K562 (cell line): ENCODE measurements at regions of chr15 and their contacts with region 1.

Region 1: DNA sequence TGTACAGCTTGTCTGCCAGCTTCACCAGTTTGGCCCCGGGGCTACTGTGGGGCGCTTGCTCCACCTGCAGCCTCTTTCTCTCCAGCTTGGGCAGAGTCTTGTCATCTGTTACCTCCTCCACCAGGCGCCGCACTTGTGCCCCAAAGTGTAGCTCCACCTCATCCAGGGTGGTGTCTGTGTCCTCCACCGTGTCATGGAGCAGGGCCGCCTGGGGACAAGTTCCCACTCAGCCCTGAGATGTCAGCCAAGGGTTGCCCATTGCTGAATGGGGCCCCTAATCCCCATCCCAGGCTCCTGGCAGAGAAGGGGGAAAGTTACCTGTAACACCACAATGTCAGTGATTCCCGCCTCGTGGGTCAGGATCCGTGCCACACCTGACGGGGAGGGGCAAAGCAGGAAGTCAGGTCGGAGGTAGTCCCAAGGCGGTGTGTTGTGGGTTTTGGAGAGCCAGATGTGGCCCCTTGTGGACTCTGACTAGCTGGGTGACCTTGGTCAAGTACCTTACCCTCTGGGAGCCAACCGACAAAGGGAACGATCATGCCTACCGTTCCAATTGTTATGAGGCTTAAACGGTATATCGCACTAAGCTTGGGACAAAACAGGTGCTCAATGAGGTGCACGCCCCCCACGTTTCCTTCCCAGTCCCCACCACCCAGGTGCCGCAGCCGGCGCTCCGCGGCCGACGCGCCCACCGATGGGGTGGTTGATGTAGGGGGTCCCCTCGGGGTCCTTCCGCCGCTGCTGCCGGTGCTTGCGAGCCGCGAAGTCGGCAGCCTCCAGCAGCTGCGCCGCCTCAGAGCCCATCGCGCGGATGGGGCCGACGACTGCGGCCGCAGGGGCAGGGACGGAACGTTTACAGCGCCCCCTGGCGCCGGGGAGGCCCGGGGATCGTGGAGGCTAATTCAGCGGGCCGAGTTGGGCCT is at the start of gene HDDC3:
- DNase-seq: peak; percentile 80 to 94 (median 86)
- ATAC-seq: peak; percentile 74
- H3K4me3 ChIP-seq: peak within 1 kb of the TSS; percentile 66
- H3K27ac ChIP-seq: peak within 1 kb of the TSS; percentile 92
- H3K4me1 ChIP-seq: peaks cover 44 to 69% of the 10 kb centered on the region in 2 experiments
- H3K27me3 ChIP-seq: no peaks in the 10 kb centered on the region
- CTCF ChIP-seq: peak; percentile 92 to 98 (median 98)
- EP300 ChIP-seq: peak; percentile 40
- POLR2A ChIP-seq: peak; percentile 89
- RAD21 ChIP-seq: peak; percentile 49 to 74
- polyA plus RNA-seq, gene HDDC3: 14.9 to 21.3 TPM

Region 2: GRCh38 chr15:90648137-90649070 is 283.6 kb before region 1 on chr15:
- CTCF ChIA-PET with region 1: interaction called, 8 read pairs
- POLR2A ChIA-PET with region 1: no interaction called
- in situ Hi-C with region 1: no loop called
- intact Hi-C with region 1: loop called (anchors 1 kb)
- DNase-seq: peak; percentile 67 to 97 (median 76)
- ATAC-seq: peak; percentile 83
- H3K4me3 ChIP-seq: no peak overlapping the region
- H3K27ac ChIP-seq: peak overlapping the region; percentile 97
- H3K4me1 ChIP-seq: peaks cover 33 to 38% of the 10 kb centered on the region in 2 experiments
- H3K27me3 ChIP-seq: no peaks in the 10 kb centered on the region
- CTCF ChIP-seq: peak; percentile 82 to 94 (median 88)
- EP300 ChIP-seq: peak; percentile 89
- POLR2A ChIP-seq: peak; percentile 92
- RAD21 ChIP-seq: peak; percentile 96

Region 3: DNA sequence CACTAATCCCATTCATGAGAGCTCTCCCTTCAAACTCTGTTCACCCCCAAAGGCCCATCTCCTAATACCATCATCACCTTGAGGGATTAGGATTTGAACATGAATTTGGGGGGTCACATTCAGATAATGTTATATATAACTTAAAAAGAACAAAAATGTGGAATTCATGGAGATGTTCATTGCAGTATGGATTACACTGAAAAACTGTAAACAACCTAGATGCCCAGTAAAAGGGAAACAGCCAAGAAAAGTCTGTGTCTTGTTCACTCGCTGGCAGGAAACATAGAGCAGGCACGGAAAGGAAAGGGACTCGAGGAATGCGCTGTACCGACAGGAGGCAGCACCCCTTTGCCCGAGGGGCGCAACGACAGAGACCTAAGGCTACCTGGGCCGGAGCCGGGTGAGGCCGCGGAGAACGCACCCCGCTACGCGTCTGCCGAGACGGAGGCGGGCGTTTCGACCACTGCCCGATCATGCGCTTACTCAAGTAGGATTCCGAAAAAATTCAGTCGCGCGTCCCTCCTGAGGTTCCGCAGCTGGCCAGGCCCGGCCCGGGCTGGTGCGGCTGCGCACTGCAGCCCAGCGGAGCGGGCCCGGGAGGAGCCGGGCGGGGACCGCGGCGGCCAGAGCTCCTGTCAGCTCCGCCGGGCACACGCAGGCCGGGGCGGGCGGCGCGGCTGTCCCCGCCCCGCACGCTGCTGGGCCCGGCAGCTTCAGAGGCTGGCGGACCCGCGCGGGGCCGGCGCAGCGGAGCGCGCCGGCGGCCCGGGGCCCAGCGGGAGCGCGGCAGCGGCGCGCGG is 29.8 kb before region 1 on chr15:
- CTCF ChIA-PET with region 1: interaction called, 6 read pairs
- POLR2A ChIA-PET with region 1: interaction called, 70 read pairs
- in situ Hi-C with region 1: no loop called
- intact Hi-C with region 1: loop called (anchors 1 kb)
- DNase-seq: peak; percentile 75 to 92 (median 90)
- ATAC-seq: peak; percentile 75
- H3K4me3 ChIP-seq: peak overlapping the region; percentile 69
- H3K27ac ChIP-seq: peak overlapping the region; percentile 99
- H3K4me1 ChIP-seq: peaks cover 28 to 69% of the 10 kb centered on the region in 2 experiments; a peak in 4 of 5 replicates
- H3K27me3 ChIP-seq: no peaks in the 10 kb centered on the region
- CTCF ChIP-seq: peak; percentile 61 to 77 (median 69)
- EP300 ChIP-seq: no peak
- POLR2A ChIP-seq: peak; percentile 73
- RAD21 ChIP-seq: peak in 1 of 2 experiments; percentile 45

Region 4: DNA sequence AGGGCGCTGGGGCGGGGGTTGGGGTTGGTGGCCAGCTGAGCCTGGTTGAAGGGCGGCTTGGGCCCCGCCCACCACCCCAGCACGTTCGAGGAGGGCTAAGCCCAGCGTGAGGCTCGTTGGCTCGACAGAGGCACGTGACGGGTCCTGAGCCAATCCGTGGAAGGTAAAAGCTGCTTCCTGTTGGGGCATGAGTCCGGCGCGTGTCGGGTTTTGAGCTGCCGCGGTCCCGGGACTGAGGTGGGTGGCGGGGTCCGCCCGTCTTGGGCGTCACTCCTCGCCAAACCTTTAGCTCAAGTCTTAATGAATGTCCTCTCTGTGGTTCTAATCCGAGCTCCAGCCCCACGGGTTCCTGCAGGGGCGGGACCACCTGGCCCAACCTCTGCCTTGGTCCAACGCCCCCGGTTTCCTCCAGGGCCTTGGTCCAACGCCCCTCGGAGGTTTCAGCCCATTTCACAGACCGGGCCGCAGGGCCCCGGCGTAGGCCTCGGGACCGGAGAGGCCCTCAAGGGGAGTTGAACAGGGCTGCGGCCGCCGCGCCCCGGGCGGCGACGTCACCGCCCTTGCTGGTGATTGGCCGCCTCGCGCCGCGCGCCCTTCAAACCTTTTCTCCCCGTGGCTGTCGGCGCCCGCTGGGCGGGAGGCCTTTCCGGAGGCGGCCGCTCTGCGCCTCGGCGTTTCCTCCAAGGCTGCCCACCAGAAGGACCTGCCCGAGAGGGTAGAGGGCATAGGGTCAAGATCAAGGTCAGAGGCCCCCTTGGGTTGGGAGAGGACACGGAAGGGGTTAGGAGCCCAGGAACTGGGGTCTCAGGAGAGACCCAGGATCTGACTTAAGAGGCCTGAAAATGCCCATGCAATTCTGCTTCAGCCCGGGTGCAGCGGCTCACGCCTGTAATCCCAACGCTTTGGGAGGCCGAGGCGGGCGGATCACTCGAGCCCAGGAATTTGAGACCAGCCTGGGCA is 23.0 kb after region 1 on chr15 and contains the start of gene RCCD1:
- CTCF ChIA-PET with region 1: no interaction called
- POLR2A ChIA-PET with region 1: interaction called, 14 read pairs
- in situ Hi-C with region 1: no loop called
- intact Hi-C with region 1: no loop called
- DNase-seq: peak; percentile 97 to 98 (median 98)
- ATAC-seq: peak; percentile 96
- H3K4me3 ChIP-seq: peak within 1 kb of the TSS; percentile 50
- H3K27ac ChIP-seq: peak within 1 kb of the TSS; percentile 95
- H3K4me1 ChIP-seq: peaks cover 9 to 48% of the 10 kb centered on the region in 2 experiments; a peak in 4 of 5 replicates
- H3K27me3 ChIP-seq: no peaks in the 10 kb centered on the region
- CTCF ChIP-seq: no peak
- EP300 ChIP-seq: peak; percentile 21; the same call in 1 of the 2 replicates
- POLR2A ChIP-seq: peak; percentile 93
- RAD21 ChIP-seq: 0 out of 4 replicates have a peak, but pooled peaks of 1 of the 2 experiments have one; percentile 6
- polyA plus RNA-seq, gene RCCD1: 11.1 to 12.2 TPM

Region 5: GRCh38 chr15:91049378-91050127 is 117.6 kb after region 1 on chr15:
- CTCF ChIA-PET with region 1: interaction called, 5 read pairs
- POLR2A ChIA-PET with region 1: no interaction called
- in situ Hi-C with region 1: no loop called
- intact Hi-C with region 1: loop called (anchors 5 kb)
- DNase-seq: peak; percentile 25 to 79 (median 45)
- ATAC-seq: peak; percentile 97
- H3K4me3 ChIP-seq: no peak overlapping the region
- H3K27ac ChIP-seq: no peak overlapping the region
- H3K4me1 ChIP-seq: peaks cover 0 to 10% of the 10 kb centered on the region in 2 experiments; a peak in 3 of 5 replicates
- H3K27me3 ChIP-seq: peaks cover 5 to 12% of the 10 kb centered on the region in 2 experiments; a peak in 4 of 5 replicates
- CTCF ChIP-seq: peak; percentile 75 to 84 (median 81)
- EP300 ChIP-seq: no peak
- POLR2A ChIP-seq: no peak
- RAD21 ChIP-seq: peak; percentile 85 to 88

Region 6: DNA sequence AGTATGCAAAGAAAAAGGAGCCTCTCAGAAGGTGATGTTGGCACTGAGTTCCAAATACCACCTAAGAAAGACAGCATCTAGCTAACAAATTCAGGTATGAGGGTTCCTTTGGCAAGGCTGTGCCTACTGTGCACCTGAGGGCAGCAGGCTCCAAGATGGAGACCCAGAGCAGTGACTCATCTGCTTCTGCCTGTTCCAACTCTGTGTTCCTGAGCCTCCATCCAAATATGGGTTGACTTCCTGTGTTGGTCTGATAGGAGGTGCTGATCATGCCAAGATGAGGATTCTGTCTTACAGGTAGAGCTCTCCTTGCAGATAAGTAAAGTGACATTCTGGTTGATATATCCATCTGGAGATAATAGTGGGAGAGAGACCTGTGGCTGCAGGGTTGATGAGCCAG is 194.1 kb after region 1 on chr15:
- CTCF ChIA-PET with region 1: no interaction called
- POLR2A ChIA-PET with region 1: no interaction called
- in situ Hi-C with region 1: no loop called
- intact Hi-C with region 1: no loop called
- DNase-seq: no peak
- ATAC-seq: no peak
- H3K4me3 ChIP-seq: no peak overlapping the region
- H3K27ac ChIP-seq: no peak overlapping the region
- H3K4me1 ChIP-seq: no peaks in the 10 kb centered on the region
- H3K27me3 ChIP-seq: peaks cover 16 to 27% of the 10 kb centered on the region in 2 experiments; a peak in 4 of 5 replicates
- CTCF ChIP-seq: no peak
- EP300 ChIP-seq: no peak
- POLR2A ChIP-seq: no peak
- RAD21 ChIP-seq: no peak

Region 7: DNA sequence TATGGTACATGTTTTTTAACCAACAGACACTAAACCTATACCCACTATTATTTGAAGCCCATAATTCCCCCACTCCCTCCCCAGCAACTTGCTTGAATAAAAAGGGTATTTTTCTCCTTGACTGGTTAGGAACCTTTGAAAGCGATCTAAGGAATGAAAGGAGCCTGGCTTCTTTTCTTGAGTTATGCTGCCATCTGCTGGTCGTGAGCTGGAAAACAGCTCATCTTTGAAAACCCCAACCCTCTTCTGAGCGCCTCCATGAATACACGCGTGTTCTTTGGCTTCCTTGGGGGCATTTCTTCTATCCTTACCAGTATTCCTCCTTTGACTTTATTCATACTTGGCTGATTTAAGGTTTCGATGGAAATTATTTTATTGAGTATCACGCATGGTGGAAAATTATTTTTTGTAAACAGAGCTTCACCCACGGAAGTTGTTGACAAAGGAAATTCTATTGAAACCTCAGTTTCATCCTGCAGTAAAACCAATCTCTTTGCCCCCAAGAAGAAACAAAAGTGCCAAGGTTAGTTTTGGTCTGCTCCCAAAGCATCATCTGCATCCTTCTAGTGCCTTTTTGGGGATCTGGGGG is 339.7 kb after region 1 on chr15:
- CTCF ChIA-PET with region 1: no interaction called
- POLR2A ChIA-PET with region 1: no interaction called
- in situ Hi-C with region 1: no loop called
- intact Hi-C with region 1: loop called (anchors 5 kb)
- DNase-seq: peak; percentile 57 to 75 (median 60)
- ATAC-seq: peak; percentile 90
- H3K4me3 ChIP-seq: no peak overlapping the region
- H3K27ac ChIP-seq: no peak overlapping the region
- H3K4me1 ChIP-seq: no peaks in the 10 kb centered on the region
- H3K27me3 ChIP-seq: peaks cover 0 to 7% of the 10 kb centered on the region in 2 experiments; a peak in 1 of 5 replicates
- CTCF ChIP-seq: peak; percentile 76 to 92 (median 77)
- EP300 ChIP-seq: no peak
- POLR2A ChIP-seq: no peak
- RAD21 ChIP-seq: peak; percentile 80 to 82